BJ (cell line): ENCODE measurements at regions of chr17 and their contacts with region 1.

Region 1: GRCh38 chr17:80498242-80498919 is 22.0 kb upstream of the NPTX1 start:
- DNase-seq: no peak
- H3K4me3 ChIP-seq: no peak overlapping the region
- H3K27me3 ChIP-seq: no peaks in the 10 kb centered on the region; the same call in 1 of the 2 replicates
- CTCF ChIP-seq: no peak

Region 2: GRCh38 chr17:80529104-80529903 is 30.9 kb after region 1 on chr17:
- CTCF ChIA-PET with region 1: no interaction called
- POLR2A ChIA-PET with region 1: interaction called, 11 read pairs
- DNase-seq: no peak
- H3K4me3 ChIP-seq: no peak overlapping the region
- H3K27me3 ChIP-seq: no peaks in the 10 kb centered on the region; the same call in 1 of the 2 replicates
- CTCF ChIP-seq: no peak